Breast epithelium (tissue), 4 donors: ENCODE measurements at regions of chr1 and their contacts with region 1.

Region 1: GRCh38 chr1:83561346-83561745 is 437.6 kb downstream of the TTLL7 start:
- DNase-seq: no peak
- H3K4me3 ChIP-seq: no peak overlapping the region
- H3K27ac ChIP-seq: no peak overlapping the region
- H3K4me1 ChIP-seq: no peaks in the 10 kb centered on the region
- H3K27me3 ChIP-seq: no peaks in the 10 kb centered on the region
- CTCF ChIP-seq: no peak
- POLR2A ChIP-seq: no peak

Region 2: GRCh38 chr1:84090447-84091245 is 529.3 kb after region 1 on chr1:
- intact Hi-C with region 1: no loop called
- DNase-seq: no peak
- H3K4me3 ChIP-seq: no peak overlapping the region
- H3K27ac ChIP-seq: no peak overlapping the region
- H3K4me1 ChIP-seq: no peaks in the 10 kb centered on the region
- H3K27me3 ChIP-seq: no peaks in the 10 kb centered on the region
- CTCF ChIP-seq: no peak
- POLR2A ChIP-seq: no peak

Region 3: GRCh38 chr1:84603941-84604830 is 1042.8 kb after region 1 on chr1:
- intact Hi-C with region 1: loop called (anchors 10 kb)
- DNase-seq: peak; percentile 63 to 65
- H3K4me3 ChIP-seq: peak overlapping the region; percentile 27 to 57 (median 28)
- H3K27ac ChIP-seq: peak overlapping the region; percentile 62 to 74
- H3K4me1 ChIP-seq: no peaks in the 10 kb centered on the region
- H3K27me3 ChIP-seq: no peaks in the 10 kb centered on the region
- CTCF ChIP-seq: no peak
- POLR2A ChIP-seq: no peak